ENCODE measurements at regions of chr2 and their contacts with region 1.

Region 1: GRCh38 chr2:218852911-218853667 is 6.5 kb upstream of the WNT6 start:
- DNase-seq: peak in 1 of 2 experiments; percentile 37
- H3K4me3 ChIP-seq: no peak overlapping the region
- H3K27ac ChIP-seq: no peak overlapping the region
- H3K4me1 ChIP-seq: peaks cover 60% of the 10 kb centered on the region
- H3K27me3 ChIP-seq: no peaks in the 10 kb centered on the region
- CTCF ChIP-seq: peak; percentile 78

Region 2: DNA sequence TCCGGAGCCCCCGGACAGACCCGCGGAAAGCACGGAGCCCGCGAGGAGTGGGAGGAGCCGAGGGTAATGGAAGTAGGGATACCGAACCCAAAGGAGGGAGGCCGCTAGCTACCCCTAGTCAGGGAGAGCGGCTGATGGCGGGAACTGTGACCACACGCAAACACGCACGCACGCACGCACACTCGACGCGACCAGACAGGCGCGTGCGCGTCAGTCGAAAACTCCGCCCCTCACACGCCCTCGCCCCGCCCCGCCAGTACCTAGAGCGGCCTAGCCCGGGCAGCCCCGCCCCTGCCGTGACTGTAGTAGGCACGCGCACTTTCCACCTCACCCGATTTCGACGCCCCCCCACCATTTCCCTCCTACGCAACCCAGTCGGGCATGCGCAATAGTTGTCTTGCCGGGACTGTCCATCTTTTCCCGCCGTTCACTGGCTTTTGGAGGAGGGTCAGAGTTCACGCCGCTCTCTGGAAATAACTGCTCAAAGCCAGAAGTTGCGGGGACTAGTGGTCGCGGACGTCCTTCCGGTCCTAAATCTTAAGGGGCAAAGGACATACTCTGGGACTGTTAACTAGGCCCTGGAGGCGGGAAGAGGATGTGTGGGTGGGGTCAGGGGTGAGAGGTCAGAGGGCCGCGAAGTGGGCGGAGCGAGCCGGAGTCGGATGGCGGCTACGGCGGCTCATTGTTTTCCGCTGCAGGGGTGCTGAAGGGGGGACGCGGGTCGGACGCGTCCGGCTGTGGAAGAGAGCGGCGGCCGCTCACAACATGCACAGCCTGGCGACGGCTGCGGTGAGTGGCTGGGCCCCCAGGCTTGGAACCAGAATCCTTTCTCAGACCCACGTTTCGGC is 284.7 kb before region 1 on chr2 and contains the starts of genes CNOT9 and USP37:
- CTCF ChIA-PET with region 1: no interaction called
- POLR2A ChIA-PET with region 1: no interaction called
- intact Hi-C with region 1: loop called (anchors 1 kb)
- DNase-seq: peak; percentile 91 to 99
- H3K4me3 ChIP-seq: peak within 1 kb of the TSS; percentile 90
- H3K27ac ChIP-seq: peak within 1 kb of the TSS; percentile 81
- H3K4me1 ChIP-seq: peaks cover 29% of the 10 kb centered on the region
- H3K27me3 ChIP-seq: no peaks in the 10 kb centered on the region
- CTCF ChIP-seq: no peak
- total RNA-seq, gene CNOT9: 45.8 and 46.0 TPM in 2 replicates
- total RNA-seq, gene USP37: 13.1 and 15.4 TPM in 2 replicates

Region 3: DNA sequence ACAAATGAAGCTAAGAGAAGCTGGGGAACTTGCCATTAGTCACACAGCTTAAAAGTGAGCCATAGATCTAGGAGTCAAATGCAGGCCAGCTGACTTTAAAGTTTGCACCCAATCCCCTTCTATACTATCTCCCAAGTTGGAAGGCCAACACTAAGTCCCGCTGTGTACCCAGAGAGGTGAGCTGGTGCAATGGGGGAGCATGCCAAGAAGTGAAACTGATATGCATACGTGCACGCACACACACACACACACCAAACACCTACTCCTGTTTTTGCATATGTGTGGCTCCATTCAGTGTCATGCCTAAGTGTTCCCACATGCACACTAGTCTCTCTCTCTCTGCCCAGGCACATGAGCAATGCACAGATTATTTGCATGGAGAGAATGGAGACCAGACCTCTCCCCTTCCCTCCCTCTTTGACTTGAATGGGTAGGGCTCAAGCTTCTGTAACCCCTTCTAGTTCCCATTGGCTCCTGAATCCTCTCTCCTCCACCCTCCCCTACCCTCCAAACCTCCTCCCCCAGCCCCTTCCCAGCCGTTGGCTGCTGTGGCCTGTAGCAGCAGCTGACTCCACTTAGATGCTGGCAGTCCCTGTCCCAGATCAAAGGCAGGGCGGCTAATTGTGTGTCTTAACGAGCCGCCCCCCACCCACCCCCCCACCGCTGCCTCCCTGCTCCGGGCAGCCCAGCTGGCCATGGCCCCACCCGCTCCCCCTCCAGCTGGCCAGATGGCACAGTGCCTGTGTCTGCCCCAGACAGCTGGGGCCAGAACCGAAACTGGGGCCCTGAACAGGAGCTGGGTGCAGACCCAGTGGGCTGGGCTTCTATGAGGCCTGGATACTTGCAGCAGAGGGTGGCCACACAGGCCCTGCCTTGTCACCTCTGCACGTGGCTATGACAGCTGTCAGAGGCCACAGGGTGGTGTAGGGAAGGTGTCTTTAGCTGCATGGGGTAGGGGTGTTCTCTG is 33.2 kb after region 1 on chr2:
- CTCF ChIA-PET with region 1: no interaction called
- POLR2A ChIA-PET with region 1: no interaction called
- intact Hi-C with region 1: no loop called
- DNase-seq: no peak
- H3K4me3 ChIP-seq: no peak overlapping the region
- H3K27ac ChIP-seq: no peak overlapping the region
- H3K4me1 ChIP-seq: no peaks in the 10 kb centered on the region
- H3K27me3 ChIP-seq: no peaks in the 10 kb centered on the region
- CTCF ChIP-seq: no peak

Region 4: GRCh38 chr2:218898109-218898878 is 45.2 kb after region 1 on chr2:
- CTCF ChIA-PET with region 1: interaction called, 4 read pairs
- POLR2A ChIA-PET with region 1: interaction called, 8 read pairs
- intact Hi-C with region 1: loop called (anchors 1 kb)
- DNase-seq: peak in 1 of 2 experiments; percentile 71
- H3K4me3 ChIP-seq: no peak overlapping the region
- H3K27ac ChIP-seq: no peak overlapping the region
- H3K4me1 ChIP-seq: peaks cover 49% of the 10 kb centered on the region
- H3K27me3 ChIP-seq: no peaks in the 10 kb centered on the region
- CTCF ChIP-seq: peak; percentile 96

Region 5: GRCh38 chr2:219002395-219003266 is 149.5 kb after region 1 on chr2:
- CTCF ChIA-PET with region 1: no interaction called
- POLR2A ChIA-PET with region 1: no interaction called
- intact Hi-C with region 1: loop called (anchors 5 kb)
- DNase-seq: peak in 1 of 2 experiments; percentile 75
- H3K4me3 ChIP-seq: peak overlapping the region; percentile 55
- H3K27ac ChIP-seq: no peak overlapping the region
- H3K4me1 ChIP-seq: 0 out of 2 replicates have a peak, but pooled peaks cover 5% of the 10 kb centered on the region
- H3K27me3 ChIP-seq: peaks cover 19% of the 10 kb centered on the region
- CTCF ChIP-seq: peak; percentile 71

Region 6: GRCh38 chr2:219155054-219155644 is 302.1 kb after region 1 on chr2:
- CTCF ChIA-PET with region 1: no interaction called
- POLR2A ChIA-PET with region 1: no interaction called
- intact Hi-C with region 1: loop called (anchors 2 kb)
- DNase-seq: peak in 1 of 2 experiments; percentile 12
- H3K4me3 ChIP-seq: no peak overlapping the region
- H3K27ac ChIP-seq: no peak overlapping the region
- H3K4me1 ChIP-seq: no peaks in the 10 kb centered on the region
- H3K27me3 ChIP-seq: no peaks in the 10 kb centered on the region
- CTCF ChIP-seq: peak; percentile 81